ENCODE measurements at regions of chr1 and their contacts with region 1.

Region 1: DNA sequence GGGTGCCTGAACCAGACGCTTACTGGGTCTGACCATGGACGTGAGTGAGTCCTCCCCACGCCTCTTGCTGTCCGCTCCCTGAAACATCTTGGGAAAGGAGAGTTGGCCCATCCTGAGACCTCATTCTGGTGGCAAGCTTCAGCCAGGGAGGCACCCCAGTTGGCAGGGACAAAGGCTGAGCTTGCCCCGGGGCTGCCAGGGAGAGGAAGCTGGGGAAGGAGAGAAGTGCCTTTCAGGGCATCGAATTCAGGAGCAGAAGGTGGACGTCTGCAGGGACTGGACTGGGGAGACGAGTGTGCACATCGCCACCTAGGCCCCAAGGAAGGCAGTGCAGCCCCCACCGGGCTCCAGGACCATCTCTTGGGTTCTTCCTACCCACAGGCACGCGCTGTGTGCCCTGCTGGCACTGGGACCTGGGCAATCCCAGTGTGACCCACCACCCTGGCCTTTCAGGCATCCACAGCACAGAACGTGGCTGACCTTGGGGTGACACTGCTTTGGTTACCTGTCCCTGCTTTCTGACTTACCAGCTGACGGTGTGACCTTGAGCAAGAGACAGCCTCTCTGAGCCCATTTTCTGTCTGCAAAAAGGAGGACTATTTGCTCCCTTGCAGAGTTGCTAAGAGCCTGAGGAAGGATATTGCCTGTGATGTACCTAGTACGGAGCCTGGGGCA is 133.0 kb upstream of the WNT4 start:
- DNase-seq: peak; percentile 77
- H3K4me3 Mint-ChIP-seq: no peak overlapping the region
- H3K27ac Mint-ChIP-seq: no peak overlapping the region
- H3K4me1 Mint-ChIP-seq: peaks cover 13% of the 10 kb centered on the region
- H3K27me3 Mint-ChIP-seq: peaks cover 29% of the 10 kb centered on the region
- CTCF ChIP-seq: peak; percentile 79

Region 2: DNA sequence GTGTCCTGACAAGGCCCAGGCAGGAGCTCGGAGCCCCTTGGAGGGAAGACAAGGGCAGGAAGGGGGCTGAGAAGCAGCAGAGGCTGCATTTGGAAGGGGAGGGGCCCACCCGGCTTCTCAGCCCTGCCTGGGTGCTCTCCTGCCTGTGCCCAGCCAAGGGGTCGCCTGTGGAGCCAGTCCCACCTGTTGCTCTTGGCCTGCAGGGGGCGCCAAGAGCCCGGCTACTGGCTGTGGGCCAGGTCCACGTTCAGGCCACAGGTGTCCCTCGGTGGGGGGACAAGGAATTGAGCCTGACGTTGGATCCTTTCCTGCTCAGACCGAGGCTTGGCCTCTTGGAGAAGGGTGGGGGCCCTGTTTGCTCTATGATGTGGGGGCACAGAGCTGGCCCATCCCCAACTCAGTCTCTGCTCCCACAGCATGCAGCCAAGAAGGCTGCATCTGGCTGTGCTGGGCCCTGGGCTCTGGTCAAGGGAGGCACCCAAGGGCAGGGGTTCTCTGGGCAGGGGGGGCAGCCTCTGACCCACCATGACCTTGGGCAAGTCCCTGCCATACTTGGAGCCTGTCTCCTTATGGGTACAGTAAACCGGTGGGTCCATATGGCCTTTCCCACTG is 143.9 kb before region 1 on chr1:
- CTCF ChIA-PET with region 1: interaction called, 8 read pairs
- intact Hi-C with region 1: loop called (anchors 5 kb)
- DNase-seq: peak; percentile 77
- H3K4me3 Mint-ChIP-seq: no peak overlapping the region
- H3K27ac Mint-ChIP-seq: no peak overlapping the region
- H3K4me1 Mint-ChIP-seq: no peaks in the 10 kb centered on the region
- H3K27me3 Mint-ChIP-seq: no peaks in the 10 kb centered on the region
- CTCF ChIP-seq: peak; percentile 79

Region 3: DNA sequence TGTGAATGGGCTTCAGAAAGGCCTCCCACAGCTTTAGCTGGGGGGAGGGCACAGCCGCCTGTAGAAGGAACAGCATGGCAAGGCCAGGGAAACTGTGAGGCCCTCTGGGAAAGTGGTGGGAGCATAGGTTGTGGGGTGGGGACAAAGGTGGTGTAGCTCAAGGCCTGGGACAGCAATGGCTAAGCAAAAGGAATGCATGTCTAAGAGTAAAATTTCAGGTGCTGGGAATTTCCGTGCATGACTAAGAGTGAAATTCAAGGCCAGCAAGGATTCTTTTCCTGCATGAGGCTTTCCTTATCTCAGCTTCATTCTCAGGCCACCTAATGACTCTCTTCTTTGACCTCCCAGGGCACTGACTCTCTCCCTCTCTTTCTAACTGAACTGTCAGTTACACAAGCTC is 46.5 kb before region 1 on chr1:
- CTCF ChIA-PET with region 1: no interaction called
- intact Hi-C with region 1: loop called (anchors 10 kb)
- DNase-seq: peak; percentile 50
- H3K4me3 Mint-ChIP-seq: no peak overlapping the region
- H3K27ac Mint-ChIP-seq: no peak overlapping the region
- H3K4me1 Mint-ChIP-seq: peaks cover 26% of the 10 kb centered on the region
- H3K27me3 Mint-ChIP-seq: no peaks in the 10 kb centered on the region
- CTCF ChIP-seq: no peak

Region 4: DNA sequence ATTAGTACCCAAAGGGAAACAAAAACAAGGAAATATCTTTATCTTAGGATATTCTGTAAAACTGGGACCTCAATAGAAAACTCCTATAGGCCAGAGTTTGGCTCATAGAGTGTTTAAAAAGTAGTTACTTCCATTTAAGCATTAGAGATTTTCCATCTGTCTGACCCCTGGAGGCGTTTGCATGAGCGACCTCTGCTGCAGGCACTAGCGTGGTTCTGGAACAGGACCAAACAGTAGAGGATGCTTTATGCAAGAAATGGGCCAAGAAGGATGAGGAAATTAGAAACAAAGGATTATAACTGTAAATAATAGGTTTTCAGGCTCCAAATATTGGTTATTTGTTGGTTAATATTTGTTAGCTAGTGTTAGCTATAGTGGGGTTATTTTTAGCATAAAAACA is 181.5 kb after region 1 on chr1:
- CTCF ChIA-PET with region 1: no interaction called
- intact Hi-C with region 1: no loop called
- DNase-seq: no peak
- H3K4me3 Mint-ChIP-seq: no peak overlapping the region
- H3K27ac Mint-ChIP-seq: no peak overlapping the region
- H3K4me1 Mint-ChIP-seq: peaks cover 20% of the 10 kb centered on the region
- H3K27me3 Mint-ChIP-seq: no peaks in the 10 kb centered on the region
- CTCF ChIP-seq: no peak

Region 5: GRCh38 chr1:22488319-22488718 is 212.5 kb after region 1 on chr1:
- CTCF ChIA-PET with region 1: no interaction called
- intact Hi-C with region 1: no loop called
- DNase-seq: no peak
- H3K4me3 Mint-ChIP-seq: no peak overlapping the region
- H3K27ac Mint-ChIP-seq: no peak overlapping the region
- H3K4me1 Mint-ChIP-seq: no peaks in the 10 kb centered on the region
- H3K27me3 Mint-ChIP-seq: no peaks in the 10 kb centered on the region
- CTCF ChIP-seq: no peak